Heart right ventricle (tissue), 16 donors: ENCODE measurements at regions of chr11 and their contacts with region 1.

Region 1: DNA sequence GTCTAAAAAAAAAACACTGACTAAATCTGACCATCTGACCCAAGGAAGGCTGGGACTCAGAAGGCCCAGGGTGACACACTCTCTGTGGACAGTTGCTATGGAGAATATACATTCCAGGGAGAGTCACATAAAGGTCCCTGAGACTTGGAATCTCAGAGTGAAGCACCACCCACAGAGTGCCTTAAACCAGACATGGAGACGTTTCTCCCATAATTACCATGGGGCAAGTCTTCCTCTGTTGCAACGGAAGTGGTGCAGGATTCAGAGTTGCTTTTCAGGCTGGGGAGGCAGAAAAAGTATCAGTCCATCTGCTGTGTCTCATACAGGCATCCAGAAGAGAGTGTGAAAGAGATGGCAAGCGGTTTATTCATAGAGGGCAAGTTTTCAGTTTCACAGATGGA is 58.7 kb upstream of the SLN start:
- DNase-seq: no peak
- ATAC-seq: no peak
- H3K4me3 ChIP-seq: no peak overlapping the region
- H3K27ac ChIP-seq: peak overlapping the region in 1 of 10 donors; percentile 4
- H3K4me1 ChIP-seq: peaks cover 0 to 5% (median 0%) of the 10 kb centered on the region in 9 donors
- H3K27me3 ChIP-seq: peaks cover 0 to 10% (median 0%) of the 10 kb centered on the region in 7 donors
- CTCF ChIP-seq: no peak

Region 2: GRCh38 chr11:107565219-107565937 is 205.2 kb before region 1 on chr11 and contains the start of gene ALKBH8:
- intact Hi-C with region 1: loop called in 7 of 10 experiments (anchors 5 to 10 kb)
- DNase-seq: peak; percentile 72 to 81
- ATAC-seq: peak; percentile 96 to 98 (median 96)
- H3K4me3 ChIP-seq: peak within 1 kb of the TSS; percentile 60 to 98 (median 88)
- H3K27ac ChIP-seq: peak within 1 kb of the TSS in 9 of 10 donors; percentile 72 to 91 (median 80)
- H3K4me1 ChIP-seq: peaks cover 0 to 34% (median 25%) of the 10 kb centered on the region in 9 donors
- H3K27me3 ChIP-seq: peaks cover 0 to 13% (median 5%) of the 10 kb centered on the region in 7 donors
- CTCF ChIP-seq: no peak
- total RNA-seq, gene ALKBH8: 5.4 to 7.8 (median 6.8) TPM

Region 3: DNA sequence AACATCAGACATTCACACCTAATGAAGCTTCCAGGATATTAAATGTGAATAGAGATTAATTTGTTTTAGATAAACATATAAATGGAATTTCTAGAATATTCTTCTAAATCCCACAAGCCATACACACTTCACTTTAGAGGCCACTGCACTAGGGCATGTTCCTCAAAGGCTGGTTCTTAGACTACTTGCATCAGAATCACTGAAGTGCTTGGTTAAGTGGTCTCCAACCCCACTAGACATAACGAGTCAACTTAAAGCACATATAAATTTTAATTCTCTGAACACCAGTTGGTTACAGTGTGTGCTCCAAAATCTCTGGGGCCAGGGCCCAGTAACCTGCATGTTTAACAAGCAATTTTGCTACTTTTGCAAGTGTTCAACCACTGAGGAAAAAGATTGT is 197.1 kb before region 1 on chr11:
- intact Hi-C with region 1: loop called in 9 of 10 experiments (anchors 5 to 10 kb)
- DNase-seq: no peak
- ATAC-seq: no peak
- H3K4me3 ChIP-seq: no peak overlapping the region
- H3K27ac ChIP-seq: no peak overlapping the region
- H3K4me1 ChIP-seq: no peaks in the 10 kb centered on the region
- H3K27me3 ChIP-seq: peaks cover 0 to 27% (median 7%) of the 10 kb centered on the region in 7 donors
- CTCF ChIP-seq: no peak